GM12878 (cell line): ENCODE measurements at regions of chr14 and their contacts with region 1.

Region 1: DNA sequence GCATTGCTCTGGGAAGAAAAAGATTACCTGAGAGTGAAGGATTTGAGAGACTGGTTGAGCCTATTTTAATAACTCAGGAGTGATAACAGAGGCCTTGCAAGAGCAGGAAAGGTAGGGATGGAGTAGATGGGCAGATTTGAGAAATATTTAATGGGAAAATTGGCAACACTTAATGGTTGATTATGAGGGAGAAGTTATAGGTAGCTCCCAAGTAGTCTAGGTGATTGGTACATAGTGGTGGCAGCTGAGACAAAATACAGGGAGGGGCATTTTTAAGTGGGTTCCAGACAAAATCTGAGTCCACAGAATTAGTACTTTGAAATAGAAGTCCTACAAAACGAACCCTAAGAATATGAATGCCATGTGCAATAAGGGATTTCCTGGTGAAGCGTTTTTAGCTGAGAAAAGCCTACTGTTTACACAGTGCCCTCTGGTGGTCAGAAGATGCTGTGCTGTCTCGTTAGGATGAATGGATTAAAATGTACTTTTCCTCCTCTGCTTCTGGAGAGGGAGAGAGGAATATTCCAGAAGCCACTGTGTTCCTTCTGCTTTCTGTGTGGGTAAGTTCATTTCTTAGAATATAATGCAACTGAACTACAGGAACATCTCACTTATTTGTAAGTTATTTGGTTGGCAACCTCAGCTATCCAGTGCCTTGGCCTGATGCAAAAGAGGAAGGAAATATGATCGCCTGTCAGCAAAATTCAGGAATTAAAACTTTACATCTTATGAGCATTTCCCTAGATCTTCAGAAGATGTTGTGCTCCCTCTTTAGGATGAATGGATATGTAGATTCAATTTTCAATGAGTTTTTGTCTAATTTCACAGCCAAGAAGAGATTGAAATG is 6.5 kb downstream of the ZBTB1 start:
- DNase-seq: no peak
- ATAC-seq: peak; percentile 50
- H3K4me3 ChIP-seq: peak overlapping the region; percentile 40; the same call in 1 of the 2 replicates
- H3K27ac ChIP-seq: peak overlapping the region; percentile 68
- H3K4me1 ChIP-seq: peaks cover 25% of the 10 kb centered on the region
- H3K27me3 ChIP-seq: no peaks in the 10 kb centered on the region
- CTCF ChIP-seq: peak; percentile 82 to 95 (median 84)
- EP300 ChIP-seq: no peak
- POLR2A ChIP-seq: no peak
- RAD21 ChIP-seq: peak; percentile 68

Region 2: DNA sequence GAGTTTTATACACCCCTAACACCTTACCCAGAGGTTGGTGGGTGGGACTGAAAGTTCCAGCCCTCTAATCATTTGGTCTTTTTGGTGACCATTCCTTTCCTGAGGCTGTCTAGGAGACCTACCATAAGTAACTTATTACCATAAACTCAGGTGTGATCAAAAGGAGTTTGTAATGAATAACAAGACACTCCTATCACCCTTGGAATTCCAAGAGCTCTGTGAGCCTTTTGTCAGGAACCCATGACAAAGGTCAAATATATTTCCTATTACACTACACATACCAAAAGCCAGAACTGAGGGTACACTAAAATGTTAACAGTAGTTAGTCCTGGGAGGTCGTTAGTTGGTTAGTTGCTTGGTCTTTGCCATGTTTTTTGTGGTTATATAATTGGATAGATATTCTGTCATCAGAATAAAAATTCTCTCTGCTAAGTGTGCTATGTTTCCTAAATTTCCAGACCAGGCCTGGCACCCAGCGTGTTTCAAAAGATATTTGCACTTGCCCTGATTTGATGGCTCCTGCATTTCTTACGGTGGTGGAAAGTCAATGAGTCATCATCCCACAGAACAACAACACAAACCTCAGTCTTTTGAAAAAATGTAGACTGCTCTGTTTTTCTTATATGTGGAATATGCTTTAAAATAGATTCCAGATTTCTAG is 72.7 kb before region 1 on chr14:
- CTCF ChIA-PET with region 1: interaction called, 63 read pairs
- POLR2A ChIA-PET with region 1: no interaction called
- RAD21 ChIA-PET with region 1: no interaction called
- SMC1A ChIA-PET with region 1: interaction called, 3 read pairs
- in situ Hi-C with region 1: no loop called
- intact Hi-C with region 1: no loop called
- DNase-seq: no peak
- ATAC-seq: no peak
- H3K4me3 ChIP-seq: no peak overlapping the region
- H3K27ac ChIP-seq: no peak overlapping the region
- H3K4me1 ChIP-seq: no peaks in the 10 kb centered on the region
- H3K27me3 ChIP-seq: no peaks in the 10 kb centered on the region
- CTCF ChIP-seq: no peak
- EP300 ChIP-seq: no peak
- POLR2A ChIP-seq: no peak
- RAD21 ChIP-seq: no peak

Region 3: GRCh38 chr14:64444984-64445845 is 65.8 kb before region 1 on chr14:
- CTCF ChIA-PET with region 1: interaction called, 7 read pairs
- POLR2A ChIA-PET with region 1: interaction called, 3 read pairs
- RAD21 ChIA-PET with region 1: interaction called, 4 read pairs
- SMC1A ChIA-PET with region 1: interaction called, 9 read pairs
- in situ Hi-C with region 1: no loop called
- intact Hi-C with region 1: loop called (anchors 2 kb)
- DNase-seq: peak; percentile 84
- ATAC-seq: peak; percentile 99
- H3K4me3 ChIP-seq: no peak overlapping the region
- H3K27ac ChIP-seq: peak overlapping the region; percentile 97
- H3K4me1 ChIP-seq: peaks cover 22% of the 10 kb centered on the region
- H3K27me3 ChIP-seq: no peaks in the 10 kb centered on the region
- CTCF ChIP-seq: peak in 2 of 3 experiments; percentile 15 to 20; a peak in 1 of 6 replicates
- EP300 ChIP-seq: peak; percentile 75 to 77; a peak in 2 of 4 replicates
- POLR2A ChIP-seq: peak; percentile 37; the same call in 1 of the 2 replicates
- RAD21 ChIP-seq: no peak

Region 4: GRCh38 chr14:64491637-64492036 is 19.4 kb before region 1 on chr14:
- CTCF ChIA-PET with region 1: interaction called, 43 read pairs
- POLR2A ChIA-PET with region 1: interaction called, 3 read pairs
- RAD21 ChIA-PET with region 1: interaction called, 14 read pairs
- SMC1A ChIA-PET with region 1: interaction called, 18 read pairs
- in situ Hi-C with region 1: no loop called
- intact Hi-C with region 1: no loop called
- DNase-seq: no peak
- ATAC-seq: no peak
- H3K4me3 ChIP-seq: no peak overlapping the region
- H3K27ac ChIP-seq: no peak overlapping the region
- H3K4me1 ChIP-seq: no peaks in the 10 kb centered on the region
- H3K27me3 ChIP-seq: no peaks in the 10 kb centered on the region
- CTCF ChIP-seq: no peak
- EP300 ChIP-seq: no peak
- POLR2A ChIP-seq: no peak
- RAD21 ChIP-seq: no peak

Region 5: DNA sequence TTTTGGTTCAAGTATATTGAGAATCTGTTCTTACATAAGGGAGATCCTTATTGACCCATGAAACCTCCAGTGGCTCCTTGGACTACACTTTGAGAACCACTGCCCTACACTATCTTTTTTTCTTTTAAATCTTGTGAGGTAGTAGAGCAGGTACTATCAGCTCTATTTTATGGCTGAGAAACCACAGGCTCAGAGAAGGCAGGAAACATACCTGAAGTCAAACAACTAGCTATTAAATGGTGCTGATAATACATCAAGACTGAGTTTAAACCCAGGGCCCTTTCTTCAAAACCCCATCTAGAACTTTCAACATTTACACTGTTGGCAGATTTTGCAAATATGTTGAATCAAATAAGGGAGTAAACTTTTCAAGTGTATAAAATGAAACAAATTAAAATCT is 14.3 kb before region 1 on chr14:
- CTCF ChIA-PET with region 1: interaction called, 43 read pairs
- POLR2A ChIA-PET with region 1: interaction called, 19 read pairs
- RAD21 ChIA-PET with region 1: interaction called, 14 read pairs
- SMC1A ChIA-PET with region 1: interaction called, 29 read pairs
- in situ Hi-C with region 1: no loop called
- intact Hi-C with region 1: no loop called
- DNase-seq: no peak
- ATAC-seq: peak; percentile 10; the same call in 2 of the 3 replicates
- H3K4me3 ChIP-seq: no peak overlapping the region
- H3K27ac ChIP-seq: no peak overlapping the region
- H3K4me1 ChIP-seq: 0 out of 2 replicates have a peak, but pooled peaks cover 3% of the 10 kb centered on the region
- H3K27me3 ChIP-seq: no peaks in the 10 kb centered on the region
- CTCF ChIP-seq: no peak
- EP300 ChIP-seq: no peak
- POLR2A ChIP-seq: no peak
- RAD21 ChIP-seq: no peak

Region 6: DNA sequence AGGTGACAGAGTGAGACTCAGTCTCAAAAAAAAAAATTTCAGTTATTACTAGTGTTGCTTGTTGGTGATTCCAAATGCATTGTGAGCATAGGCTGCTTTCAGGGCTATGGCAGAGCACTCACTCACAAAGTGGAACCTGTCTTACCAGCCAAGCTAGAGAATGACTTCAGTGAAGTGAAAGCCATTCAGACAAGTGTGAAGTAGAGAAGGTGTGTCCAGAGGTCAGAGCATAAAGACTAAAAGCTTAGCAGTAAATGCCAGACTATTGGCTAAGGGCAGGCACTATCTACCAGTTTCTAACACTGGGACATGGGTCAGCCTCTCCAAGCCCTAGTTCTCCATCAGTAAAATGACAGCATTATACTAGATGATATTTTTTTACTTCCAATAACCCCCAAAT is 51.4 kb after region 1 on chr14:
- CTCF ChIA-PET with region 1: no interaction called
- POLR2A ChIA-PET with region 1: no interaction called
- RAD21 ChIA-PET with region 1: no interaction called
- SMC1A ChIA-PET with region 1: no interaction called
- in situ Hi-C with region 1: no loop called
- intact Hi-C with region 1: no loop called
- DNase-seq: no peak
- ATAC-seq: no peak
- H3K4me3 ChIP-seq: no peak overlapping the region
- H3K27ac ChIP-seq: no peak overlapping the region
- H3K4me1 ChIP-seq: no peaks in the 10 kb centered on the region
- H3K27me3 ChIP-seq: no peaks in the 10 kb centered on the region; a peak in 1 of 4 replicates
- CTCF ChIP-seq: no peak
- EP300 ChIP-seq: no peak
- POLR2A ChIP-seq: no peak
- RAD21 ChIP-seq: no peak